ENCODE measurements at regions of chr1 and their contacts with region 1.

Region 1: GRCh38 chr1:102071451-102071850 is 74.7 kb upstream of the OLFM3 start:
- DNase-seq: no peak
- H3K4me3 ChIP-seq: no peak overlapping the region
- H3K4me3 Mint-ChIP-seq: no peak overlapping the region
- H3K27ac Mint-ChIP-seq: no peak overlapping the region
- H3K4me1 ChIP-seq: no peaks in the 10 kb centered on the region
- H3K4me1 Mint-ChIP-seq: no peaks in the 10 kb centered on the region
- H3K27me3 ChIP-seq: no peaks in the 10 kb centered on the region
- H3K27me3 Mint-ChIP-seq: peaks cover 3% of the 10 kb centered on the region
- CTCF ChIP-seq: no peak

Region 2: GRCh38 chr1:102047724-102048123 is 23.7 kb before region 1 on chr1:
- CTCF ChIA-PET with region 1: no interaction called
- POLR2A ChIA-PET with region 1: no interaction called
- intact Hi-C with region 1: loop called (anchors 1 kb)
- DNase-seq: no peak
- H3K4me3 ChIP-seq: no peak overlapping the region
- H3K4me3 Mint-ChIP-seq: no peak overlapping the region
- H3K27ac Mint-ChIP-seq: no peak overlapping the region
- H3K4me1 ChIP-seq: no peaks in the 10 kb centered on the region
- H3K4me1 Mint-ChIP-seq: no peaks in the 10 kb centered on the region
- H3K27me3 ChIP-seq: no peaks in the 10 kb centered on the region
- H3K27me3 Mint-ChIP-seq: peaks cover under 1% of the 10 kb centered on the region
- CTCF ChIP-seq: no peak